Naive thymus-derived CD4-positive, alpha-beta T cell (primary cell): ENCODE measurements at regions of chr11 and their contacts with region 1.

Region 1: GRCh38 chr11:46700241-46701077 is at the starts of genes ARHGAP1 and ZNF408:
- DNase-seq: peak; percentile 94 to 99 (median 99)
- ATAC-seq: peak; percentile 99
- H3K4me3 ChIP-seq: peak within 1 kb of the TSS; percentile 95
- H3K4me3 Mint-ChIP-seq: peak within 1 kb of the TSS; percentile 91 to 100 (median 99)
- H3K27ac ChIP-seq: peak within 1 kb of the TSS; percentile 75
- H3K27ac Mint-ChIP-seq: peak within 1 kb of the TSS; percentile 82 to 98 (median 96)
- H3K4me1 ChIP-seq: peaks cover 33 to 38% of the 10 kb centered on the region in 2 donors
- H3K4me1 Mint-ChIP-seq: peaks cover 40 to 71% (median 54%) of the 10 kb centered on the region in 7 donors
- H3K27me3 ChIP-seq: no peaks in the 10 kb centered on the region
- H3K27me3 Mint-ChIP-seq: peaks cover 0 to 5% (median 0%) of the 10 kb centered on the region in 5 donors
- total RNA-seq, gene ARHGAP1: 44.6 to 82.5 (median 64.6) TPM
- total RNA-seq, gene ZNF408: 7.8 to 20.0 (median 16.6) TPM

Region 2: GRCh38 chr11:45917623-45918330 is 782.7 kb before region 1 on chr11 and contains the start of gene PEX16:
- CTCF ChIA-PET with region 1: no interaction called
- POLR2A ChIA-PET with region 1: interaction called, 3 read pairs
- intact Hi-C with region 1: loop called (anchors 1 to 2 kb)
- DNase-seq: peak; percentile 86 to 98 (median 97)
- ATAC-seq: peak; percentile 95
- H3K4me3 ChIP-seq: peak within 1 kb of the TSS; percentile 72
- H3K4me3 Mint-ChIP-seq: peak within 1 kb of the TSS; percentile 86 to 98 (median 96)
- H3K27ac ChIP-seq: peak within 1 kb of the TSS; percentile 87
- H3K27ac Mint-ChIP-seq: peak within 1 kb of the TSS; percentile 91 to 100 (median 98)
- H3K4me1 ChIP-seq: peaks cover 24 to 36% of the 10 kb centered on the region in 2 donors
- H3K4me1 Mint-ChIP-seq: peaks cover 31 to 66% (median 49%) of the 10 kb centered on the region in 7 donors
- H3K27me3 ChIP-seq: no peaks in the 10 kb centered on the region
- H3K27me3 Mint-ChIP-seq: peaks cover 0 to 13% (median 4%) of the 10 kb centered on the region in 5 donors
- total RNA-seq, gene PEX16: 48.2 to 64.3 (median 58.1) TPM

Region 3: DNA sequence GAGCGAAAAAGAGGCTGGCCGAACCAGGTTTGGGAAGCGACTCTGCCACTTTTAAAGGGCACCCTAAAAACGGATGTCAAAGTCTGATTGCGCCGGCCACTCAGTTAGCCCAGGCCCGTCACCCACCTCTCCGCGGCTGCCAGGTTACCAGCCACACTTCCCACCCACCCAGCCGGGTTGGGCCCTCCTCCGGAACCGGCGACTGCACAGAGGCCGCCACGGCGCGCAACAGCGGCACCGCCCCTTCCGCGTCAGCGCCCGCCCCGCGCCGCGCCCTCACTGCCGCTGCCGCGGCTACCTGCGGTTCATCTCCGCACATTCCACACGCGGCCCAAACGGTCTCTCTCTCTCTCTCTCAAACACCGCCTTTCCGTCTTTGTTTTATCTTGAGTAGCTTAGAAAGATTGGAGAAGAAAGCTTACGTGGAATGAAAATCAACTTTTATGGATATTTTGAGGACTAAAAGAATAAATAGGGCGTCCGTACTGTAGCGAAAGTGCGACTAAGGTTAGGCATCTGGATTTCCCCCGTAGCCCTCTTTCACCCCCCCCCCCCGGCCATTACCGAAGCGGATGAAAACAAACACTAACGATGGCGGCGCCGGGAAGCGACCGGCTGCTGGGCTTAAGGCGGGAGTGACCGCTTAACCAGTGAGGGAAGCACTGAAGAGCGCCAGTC is 83.3 kb before region 1 on chr11 and contains the starts of genes ATG13 and HARBI1:
- CTCF ChIA-PET with region 1: interaction called, 3 read pairs
- POLR2A ChIA-PET with region 1: interaction called, 18 read pairs
- intact Hi-C with region 1: loop called (anchors 1 kb)
- DNase-seq: peak; percentile 89 to 95 (median 94)
- ATAC-seq: peak; percentile 96
- H3K4me3 ChIP-seq: peak within 1 kb of the TSS; percentile 99
- H3K4me3 Mint-ChIP-seq: peak within 1 kb of the TSS; percentile 93 to 99 (median 96)
- H3K27ac ChIP-seq: peak within 1 kb of the TSS; percentile 100
- H3K27ac Mint-ChIP-seq: peak within 1 kb of the TSS; percentile 95 to 100 (median 99)
- H3K4me1 ChIP-seq: peaks cover 17 to 27% of the 10 kb centered on the region in 2 donors
- H3K4me1 Mint-ChIP-seq: peaks cover 26 to 53% (median 42%) of the 10 kb centered on the region in 7 donors
- H3K27me3 ChIP-seq: no peaks in the 10 kb centered on the region
- H3K27me3 Mint-ChIP-seq: no peaks in the 10 kb centered on the region
- total RNA-seq, gene ATG13: 70.0 to 114 (median 96.8) TPM
- total RNA-seq, gene HARBI1: 5.8 to 18.1 (median 8.0) TPM

Region 4: GRCh38 chr11:46747150-46747549 is 46.7 kb after region 1 on chr11:
- CTCF ChIA-PET with region 1: no interaction called
- POLR2A ChIA-PET with region 1: no interaction called
- intact Hi-C with region 1: no loop called
- DNase-seq: no peak
- ATAC-seq: no peak
- H3K4me3 ChIP-seq: no peak overlapping the region
- H3K4me3 Mint-ChIP-seq: no peak overlapping the region
- H3K27ac ChIP-seq: no peak overlapping the region
- H3K27ac Mint-ChIP-seq: peak overlapping the region in 3 of 9 donors; percentile 4 to 70 (median 61)
- H3K4me1 ChIP-seq: no peaks in the 10 kb centered on the region
- H3K4me1 Mint-ChIP-seq: no peaks in the 10 kb centered on the region
- H3K27me3 ChIP-seq: no peaks in the 10 kb centered on the region
- H3K27me3 Mint-ChIP-seq: no peaks in the 10 kb centered on the region

Region 5: GRCh38 chr11:46936138-46937110 is 236.0 kb after region 1 on chr11 and contains the start of gene CSTPP1:
- CTCF ChIA-PET with region 1: no interaction called
- POLR2A ChIA-PET with region 1: no interaction called
- intact Hi-C with region 1: loop called (anchors 1 to 2 kb)
- DNase-seq: peak; percentile 80 to 92 (median 89)
- ATAC-seq: peak; percentile 99
- H3K4me3 ChIP-seq: peak within 1 kb of the TSS; percentile 76
- H3K4me3 Mint-ChIP-seq: peak within 1 kb of the TSS; percentile 86 to 100 (median 92)
- H3K27ac ChIP-seq: peak within 1 kb of the TSS; percentile 72
- H3K27ac Mint-ChIP-seq: peak within 1 kb of the TSS; percentile 89 to 98 (median 92)
- H3K4me1 ChIP-seq: peaks cover 0 to 11% of the 10 kb centered on the region in 2 donors
- H3K4me1 Mint-ChIP-seq: peaks cover 5 to 24% (median 21%) of the 10 kb centered on the region in 7 donors
- H3K27me3 ChIP-seq: no peaks in the 10 kb centered on the region
- H3K27me3 Mint-ChIP-seq: peaks cover 8 to 19% (median 9%) of the 10 kb centered on the region in 5 donors
- total RNA-seq, gene CSTPP1: 9.3 to 18.6 (median 16.1) TPM

Region 6: GRCh38 chr11:46966773-46967172 is 266.3 kb after region 1 on chr11:
- CTCF ChIA-PET with region 1: no interaction called
- POLR2A ChIA-PET with region 1: no interaction called
- intact Hi-C with region 1: no loop called
- DNase-seq: no peak
- ATAC-seq: no peak
- H3K4me3 ChIP-seq: no peak overlapping the region
- H3K4me3 Mint-ChIP-seq: no peak overlapping the region
- H3K27ac ChIP-seq: no peak overlapping the region
- H3K27ac Mint-ChIP-seq: no peak overlapping the region
- H3K4me1 ChIP-seq: no peaks in the 10 kb centered on the region
- H3K4me1 Mint-ChIP-seq: peaks cover 0 to 3% (median 0%) of the 10 kb centered on the region in 7 donors
- H3K27me3 ChIP-seq: no peaks in the 10 kb centered on the region
- H3K27me3 Mint-ChIP-seq: no peaks in the 10 kb centered on the region

Region 7: GRCh38 chr11:47552566-47553416 is 852.3 kb after region 1 on chr11 and contains the start of gene CELF1:
- CTCF ChIA-PET with region 1: no interaction called
- POLR2A ChIA-PET with region 1: no interaction called
- intact Hi-C with region 1: loop called in 1 of 2 experiments (anchors 1 kb)
- DNase-seq: peak; percentile 88 to 95 (median 92)
- ATAC-seq: peak; percentile 99
- H3K4me3 ChIP-seq: peak within 1 kb of the TSS; percentile 87
- H3K4me3 Mint-ChIP-seq: peak within 1 kb of the TSS; percentile 93 to 100 (median 96)
- H3K27ac ChIP-seq: peak within 1 kb of the TSS; percentile 89
- H3K27ac Mint-ChIP-seq: peak within 1 kb of the TSS; percentile 86 to 97 (median 95)
- H3K4me1 ChIP-seq: peaks cover 27 to 34% of the 10 kb centered on the region in 2 donors
- H3K4me1 Mint-ChIP-seq: peaks cover 36 to 57% (median 42%) of the 10 kb centered on the region in 7 donors
- H3K27me3 ChIP-seq: no peaks in the 10 kb centered on the region
- H3K27me3 Mint-ChIP-seq: no peaks in the 10 kb centered on the region
- total RNA-seq, gene CELF1: 107 to 148 (median 129) TPM

Region 8: DNA sequence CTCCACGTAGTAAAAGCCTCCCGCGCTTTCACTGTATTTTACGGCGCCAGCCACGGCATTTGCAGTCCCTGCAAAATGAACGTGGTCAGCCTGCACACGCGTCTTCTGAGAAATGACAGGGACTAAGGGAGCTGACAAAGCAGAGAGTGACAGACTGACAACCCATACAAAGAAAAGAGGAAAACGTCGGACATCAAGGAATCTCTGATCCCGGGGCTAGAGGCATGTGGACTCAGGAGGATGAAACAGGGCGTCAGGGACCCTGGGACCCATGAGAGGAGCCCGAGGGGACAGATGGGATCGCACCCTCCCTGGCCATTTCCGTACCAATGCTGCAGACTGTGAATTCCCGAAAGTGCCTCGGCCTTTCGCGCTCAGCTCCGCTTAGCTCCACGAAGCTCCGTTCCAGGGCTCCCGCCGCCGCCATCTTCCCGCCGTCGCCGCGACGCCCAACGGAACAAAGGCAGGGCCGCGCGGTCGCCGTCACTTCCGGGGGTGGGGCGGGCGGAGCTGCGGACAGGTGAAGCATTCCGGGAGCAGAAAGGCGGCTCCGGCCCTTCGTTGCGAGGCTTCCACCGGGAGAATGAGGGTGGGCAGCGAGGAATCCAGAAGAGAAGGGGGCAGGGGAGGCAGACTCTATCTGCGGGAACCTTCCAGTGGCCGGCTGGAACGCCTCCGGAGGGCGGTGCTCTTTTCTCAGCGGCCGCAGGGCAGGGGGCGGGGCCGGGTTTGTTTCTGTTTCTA is 1147.6 kb after region 1 on chr11 and contains the start of gene NUP160:
- CTCF ChIA-PET with region 1: no interaction called
- POLR2A ChIA-PET with region 1: no interaction called
- intact Hi-C with region 1: loop called in 1 of 2 experiments (anchors 2 kb)
- DNase-seq: peak; percentile 78 to 92 (median 85)
- ATAC-seq: peak; percentile 92
- H3K4me3 ChIP-seq: peak within 1 kb of the TSS; percentile 88
- H3K4me3 Mint-ChIP-seq: peak within 1 kb of the TSS; percentile 88 to 100 (median 98)
- H3K27ac ChIP-seq: peak within 1 kb of the TSS; percentile 97
- H3K27ac Mint-ChIP-seq: peak within 1 kb of the TSS; percentile 72 to 100 (median 98)
- H3K4me1 ChIP-seq: peaks cover 12 to 66% of the 10 kb centered on the region in 2 donors
- H3K4me1 Mint-ChIP-seq: peaks cover 38 to 71% (median 62%) of the 10 kb centered on the region in 7 donors
- H3K27me3 ChIP-seq: no peaks in the 10 kb centered on the region
- H3K27me3 Mint-ChIP-seq: peaks cover 0 to 2% (median 0%) of the 10 kb centered on the region in 5 donors
- total RNA-seq, gene NUP160: 53.9 to 68.0 (median 65.5) TPM